Activated CD4-positive, alpha-beta T cell treated with anti-CD3 and anti-CD28 coated beads, Interleukin-2, amount 10 ng/mL, durations not matched to agents 24 days and 14 days (primary cell): ENCODE measurements at regions of chr17 and their contacts with region 1.

Region 1: GRCh38 chr17:65027305-65027704 is 29.2 kb downstream of the GNA13 start:
- DNase-seq: peak; percentile 83
- H3K4me3 Mint-ChIP-seq: peak overlapping the region; percentile 62
- H3K27ac Mint-ChIP-seq: peak overlapping the region; percentile 92
- H3K4me1 Mint-ChIP-seq: peaks cover 61% of the 10 kb centered on the region
- H3K27me3 Mint-ChIP-seq: no peaks in the 10 kb centered on the region

Region 2: DNA sequence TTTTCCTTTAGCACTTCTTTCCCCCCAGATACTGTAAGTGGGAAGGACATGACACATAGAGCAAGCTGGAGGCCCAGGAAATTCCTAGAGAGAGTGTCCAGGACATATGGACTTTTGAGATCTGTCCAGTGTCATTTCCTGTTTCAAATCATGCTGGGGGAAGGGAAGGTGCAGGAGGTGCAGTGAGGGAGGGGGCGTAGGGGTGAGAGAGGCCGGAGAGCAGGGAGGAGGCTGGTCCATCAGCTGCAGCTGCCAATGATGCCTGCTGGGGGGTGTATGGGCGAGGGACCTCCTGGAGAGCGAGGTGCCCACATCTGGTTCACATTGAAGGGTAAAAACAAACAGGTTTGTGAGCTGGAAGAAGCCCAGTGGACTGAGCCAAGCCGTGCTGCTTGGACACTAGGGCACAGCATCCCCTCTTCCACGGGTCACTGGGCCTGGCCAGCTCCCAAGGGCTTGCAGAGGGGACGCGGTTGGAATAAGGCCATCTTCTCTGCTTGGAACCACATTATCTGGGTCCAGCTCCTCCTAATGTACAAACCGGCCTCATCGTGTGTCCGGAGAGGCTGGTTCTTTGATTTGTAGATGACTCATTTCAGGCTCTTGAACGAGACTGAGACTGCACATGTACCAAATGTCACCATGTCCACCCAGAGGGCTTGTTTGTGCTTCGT is 294.8 kb before region 1 on chr17:
- intact Hi-C with region 1: no loop called
- DNase-seq: no peak
- H3K4me3 Mint-ChIP-seq: no peak overlapping the region
- H3K27ac Mint-ChIP-seq: no peak overlapping the region
- H3K4me1 Mint-ChIP-seq: peaks cover 8% of the 10 kb centered on the region
- H3K27me3 Mint-ChIP-seq: no peaks in the 10 kb centered on the region

Region 3: GRCh38 chr17:64975329-64976087 is 51.8 kb before region 1 on chr17:
- intact Hi-C with region 1: loop called (anchors 2 kb)
- DNase-seq: peak; percentile 100
- H3K4me3 Mint-ChIP-seq: peak overlapping the region; percentile 76
- H3K27ac Mint-ChIP-seq: peak overlapping the region; percentile 93
- H3K4me1 Mint-ChIP-seq: peaks cover 47% of the 10 kb centered on the region
- H3K27me3 Mint-ChIP-seq: no peaks in the 10 kb centered on the region

Region 4: DNA sequence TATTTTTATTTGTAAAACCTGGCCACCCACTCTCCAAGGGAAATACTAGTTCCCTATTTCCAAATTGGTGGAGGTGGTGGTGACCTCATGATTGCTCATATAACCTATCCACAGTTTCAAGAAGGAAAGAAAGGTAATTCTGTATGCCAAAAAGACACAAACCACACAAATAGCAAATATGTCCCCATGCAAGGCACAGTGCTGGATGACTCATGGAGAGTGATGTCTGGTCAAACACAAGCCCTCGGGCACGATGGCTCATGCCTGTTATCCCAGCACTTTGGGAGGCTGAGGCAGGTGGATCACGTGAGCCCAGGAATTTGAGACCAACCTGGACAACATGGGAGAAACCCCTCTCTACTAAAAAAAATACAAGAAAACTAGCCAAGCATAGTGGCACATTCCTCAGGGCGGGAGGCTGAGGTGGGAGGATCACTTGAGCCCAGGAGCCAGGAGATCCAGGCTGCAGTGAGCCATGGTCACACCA is 34.9 kb before region 1 on chr17:
- intact Hi-C with region 1: no loop called
- DNase-seq: no peak
- H3K4me3 Mint-ChIP-seq: peak overlapping the region; percentile 9
- H3K27ac Mint-ChIP-seq: peak overlapping the region; percentile 70
- H3K4me1 Mint-ChIP-seq: peaks cover 32% of the 10 kb centered on the region
- H3K27me3 Mint-ChIP-seq: peaks cover 2% of the 10 kb centered on the region

Region 5: DNA sequence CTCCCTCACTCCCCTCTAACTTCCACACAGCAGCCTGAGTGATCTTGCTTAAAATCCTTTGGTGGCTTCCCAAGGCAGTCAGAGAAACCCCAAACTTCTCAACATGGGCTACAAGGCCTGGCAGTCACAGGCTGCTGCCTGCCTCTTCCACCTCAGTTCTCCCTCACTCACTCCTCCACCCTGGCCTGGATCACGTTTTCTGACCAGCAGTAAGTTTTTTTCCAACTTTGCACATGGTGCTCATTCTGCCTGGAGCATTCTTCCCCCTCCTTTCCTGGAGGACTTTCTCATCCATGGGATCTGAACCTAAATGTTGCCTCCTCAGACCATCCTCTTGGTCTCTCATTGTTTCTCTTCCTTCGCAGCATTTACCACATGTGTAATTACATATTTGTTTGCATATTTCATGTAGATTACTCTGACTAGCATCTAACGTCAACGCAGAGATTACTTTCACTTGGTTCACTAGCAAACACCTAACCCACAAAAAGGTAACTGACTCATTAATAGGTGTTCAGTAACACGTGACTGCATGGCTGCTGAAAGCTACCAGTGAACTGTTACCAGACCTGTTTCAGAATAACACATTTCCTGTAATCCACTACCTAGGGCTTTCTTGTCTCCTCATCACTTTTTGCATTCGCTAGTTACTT is 12.2 kb after region 1 on chr17:
- intact Hi-C with region 1: loop called (anchors 1 kb)
- DNase-seq: peak; percentile 85
- H3K4me3 Mint-ChIP-seq: peak overlapping the region; percentile 68
- H3K27ac Mint-ChIP-seq: peak overlapping the region; percentile 79
- H3K4me1 Mint-ChIP-seq: peaks cover 66% of the 10 kb centered on the region
- H3K27me3 Mint-ChIP-seq: no peaks in the 10 kb centered on the region

Region 6: DNA sequence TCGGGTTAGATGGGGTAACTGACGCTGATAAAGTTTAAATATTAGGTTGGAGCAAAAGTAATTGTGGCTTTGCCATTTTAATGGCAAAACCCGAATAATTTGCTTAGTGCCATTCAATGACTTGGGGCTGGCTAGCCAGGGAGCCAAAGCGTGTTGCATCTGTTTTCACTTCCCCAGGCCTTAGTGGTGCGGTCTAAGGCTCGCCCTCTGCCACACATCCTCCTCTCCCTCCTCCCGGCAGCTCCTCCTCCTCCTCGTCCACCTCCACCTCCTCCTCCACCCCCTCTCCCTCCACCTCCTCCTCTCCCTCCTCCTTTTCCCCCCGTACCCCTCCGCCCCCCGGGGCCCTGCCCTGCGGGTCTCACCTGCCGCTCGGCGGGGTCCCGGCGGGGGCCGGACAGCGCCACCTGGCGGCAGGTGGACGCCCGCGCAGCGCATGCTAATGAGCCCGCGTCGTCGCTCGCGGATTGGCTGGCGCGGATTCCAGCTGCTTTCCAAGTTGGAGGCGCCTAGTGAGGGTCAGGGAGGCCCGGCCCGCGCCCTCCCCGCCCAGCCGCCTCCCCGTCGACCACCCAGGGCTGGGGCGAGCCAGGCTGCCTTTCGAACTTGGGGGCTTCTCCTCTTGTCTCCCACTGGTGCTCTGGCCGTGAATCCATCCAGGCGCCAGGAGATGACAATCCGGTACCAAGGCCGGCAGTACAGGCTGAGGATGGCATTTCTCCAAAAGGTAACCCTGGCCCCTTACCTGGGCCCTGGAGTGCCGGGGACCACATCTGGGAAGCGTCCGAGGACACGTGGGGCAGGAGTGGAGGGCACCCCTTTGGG is 73.2 kb after region 1 on chr17:
- intact Hi-C with region 1: loop called (anchors 2 kb)
- DNase-seq: peak; percentile 96
- H3K4me3 Mint-ChIP-seq: peak overlapping the region; percentile 91
- H3K27ac Mint-ChIP-seq: peak overlapping the region; percentile 95
- H3K4me1 Mint-ChIP-seq: peaks cover 21% of the 10 kb centered on the region
- H3K27me3 Mint-ChIP-seq: peaks cover 17% of the 10 kb centered on the region

Region 7: GRCh38 chr17:65198653-65199382 is 171.5 kb after region 1 on chr17:
- intact Hi-C with region 1: loop called (anchors 5 kb)
- DNase-seq: peak; percentile 75
- H3K4me3 Mint-ChIP-seq: no peak overlapping the region
- H3K27ac Mint-ChIP-seq: no peak overlapping the region
- H3K4me1 Mint-ChIP-seq: peaks cover 24% of the 10 kb centered on the region
- H3K27me3 Mint-ChIP-seq: peaks cover 8% of the 10 kb centered on the region